Transverse colon (tissue), 4 donors: ENCODE measurements at regions of chr12 and their contacts with region 1.

Region 1: GRCh38 chr12:132925597-132926416 is 30.3 kb downstream of the ZNF605 start:
- DNase-seq: no peak
- H3K4me3 ChIP-seq: no peak overlapping the region
- H3K27ac ChIP-seq: no peak overlapping the region
- H3K4me1 ChIP-seq: no peaks in the 10 kb centered on the region
- H3K27me3 ChIP-seq: no peaks in the 10 kb centered on the region
- CTCF ChIP-seq: no peak
- EP300 ChIP-seq: no peak
- POLR2A ChIP-seq: no peak

Region 2: GRCh38 chr12:133058203-133059125 is 132.7 kb after region 1 on chr12:
- in situ Hi-C with region 1: no loop called
- intact Hi-C with region 1: loop called (anchors 5 kb)
- DNase-seq: no peak
- H3K4me3 ChIP-seq: no peak overlapping the region
- H3K27ac ChIP-seq: no peak overlapping the region
- H3K4me1 ChIP-seq: no peaks in the 10 kb centered on the region
- H3K27me3 ChIP-seq: no peaks in the 10 kb centered on the region
- CTCF ChIP-seq: no peak
- EP300 ChIP-seq: no peak
- POLR2A ChIP-seq: no peak

Region 3: DNA sequence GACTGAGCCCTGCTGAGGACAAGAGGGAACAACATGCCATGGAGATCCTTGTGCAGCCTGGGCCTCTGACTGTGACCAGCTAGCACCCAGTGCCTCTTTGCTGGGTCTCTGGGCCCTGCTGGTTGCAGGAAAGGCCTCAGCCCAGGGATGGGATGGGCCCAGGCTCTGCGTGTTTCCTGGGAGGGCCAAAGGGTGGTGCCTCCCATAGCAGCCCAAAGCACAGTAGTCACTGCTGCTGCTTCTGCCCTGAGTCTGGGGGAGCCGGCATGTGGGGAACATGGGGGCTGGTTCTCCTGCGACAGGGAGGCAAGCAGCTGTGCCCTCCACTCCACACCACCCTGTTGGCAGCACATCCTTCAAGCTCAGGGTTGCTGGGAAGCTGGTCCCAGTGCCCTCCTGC is 291.4 kb after region 1 on chr12:
- in situ Hi-C with region 1: no loop called
- intact Hi-C with region 1: no loop called
- DNase-seq: no peak
- H3K4me3 ChIP-seq: no peak overlapping the region
- H3K27ac ChIP-seq: no peak overlapping the region
- H3K4me1 ChIP-seq: no peaks in the 10 kb centered on the region
- H3K27me3 ChIP-seq: no peaks in the 10 kb centered on the region
- CTCF ChIP-seq: no peak
- EP300 ChIP-seq: no peak
- POLR2A ChIP-seq: no peak